B cell (primary cell): ENCODE measurements at regions of chr1 and their contacts with region 1.

Region 1: DNA sequence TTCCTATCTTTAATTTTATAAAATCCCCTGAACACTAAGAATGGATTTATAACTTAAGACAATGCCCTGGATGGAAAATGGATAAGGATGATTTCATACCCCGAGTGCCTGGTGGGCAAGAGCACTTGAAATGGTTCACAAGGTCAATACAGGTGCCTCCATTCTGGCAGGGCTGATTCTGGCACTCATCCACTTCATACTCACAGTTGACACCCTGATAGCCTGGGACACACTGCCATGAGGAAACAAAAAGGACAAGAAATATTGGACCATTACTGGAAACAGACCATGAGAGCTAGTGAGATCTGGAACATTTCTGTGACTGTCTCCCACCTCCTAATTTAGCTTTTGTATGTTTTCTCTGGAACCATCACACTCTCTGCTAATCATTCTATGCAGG is 39.1 kb upstream of the ADAM30 start:
- DNase-seq: no peak
- ATAC-seq: no peak
- H3K4me3 ChIP-seq: no peak overlapping the region
- H3K4me3 Mint-ChIP-seq: no peak overlapping the region
- H3K27ac ChIP-seq: no peak overlapping the region
- H3K27ac Mint-ChIP-seq: no peak overlapping the region
- H3K4me1 ChIP-seq: no peaks in the 10 kb centered on the region
- H3K4me1 Mint-ChIP-seq: no peaks in the 10 kb centered on the region
- H3K27me3 ChIP-seq: no peaks in the 10 kb centered on the region
- H3K27me3 Mint-ChIP-seq: no peaks in the 10 kb centered on the region
- CTCF ChIP-seq: no peak

Region 2: DNA sequence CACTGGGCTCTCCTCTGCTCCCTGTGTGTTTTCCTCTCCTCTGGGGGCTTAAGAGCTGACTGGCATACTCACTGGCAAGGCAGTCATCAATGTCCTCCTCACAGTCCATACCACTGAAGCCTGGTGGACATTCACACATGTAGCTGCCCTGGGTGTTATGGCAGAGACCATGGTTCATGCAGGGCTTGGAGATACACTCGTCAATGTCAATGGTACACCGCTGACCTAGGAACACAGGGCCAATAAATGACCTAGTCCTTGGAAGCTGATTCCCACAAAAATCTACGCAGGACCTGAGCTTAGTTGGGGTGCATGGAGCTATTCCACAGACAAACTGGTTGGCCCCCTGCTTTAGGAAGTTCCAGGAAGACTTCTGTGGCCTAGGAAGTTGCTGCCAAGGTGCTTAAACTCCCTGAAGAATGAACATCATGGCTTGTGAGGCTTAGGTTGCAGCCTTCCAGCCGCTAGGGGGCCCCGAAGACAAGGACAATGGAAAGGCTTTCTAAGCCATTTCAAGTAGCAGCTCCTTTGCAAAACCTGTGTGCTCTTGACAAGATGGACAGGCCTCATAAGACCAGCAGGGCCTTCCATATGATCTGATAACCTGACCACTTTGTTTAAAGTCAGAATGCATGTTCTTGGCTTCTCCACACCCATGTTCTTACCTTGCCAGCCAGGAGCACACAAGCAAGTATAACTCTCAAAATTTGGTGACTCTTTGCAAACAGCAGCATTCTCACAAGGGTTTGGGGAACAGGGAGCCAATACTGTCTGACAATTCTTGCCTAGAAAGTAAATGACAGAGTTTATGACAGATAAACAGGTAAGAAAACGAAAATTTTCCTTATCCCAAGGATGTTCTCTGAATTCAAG is 13.2 kb after region 1 on chr1:
- CTCF ChIA-PET with region 1: interaction called, 13 read pairs
- POLR2A ChIA-PET with region 1: no interaction called
- intact Hi-C with region 1: no loop called
- DNase-seq: peak; percentile 66
- ATAC-seq: peak; percentile 75
- H3K4me3 ChIP-seq: no peak overlapping the region
- H3K4me3 Mint-ChIP-seq: no peak overlapping the region
- H3K27ac ChIP-seq: no peak overlapping the region
- H3K27ac Mint-ChIP-seq: peak overlapping the region; percentile 10
- H3K4me1 ChIP-seq: no peaks in the 10 kb centered on the region
- H3K4me1 Mint-ChIP-seq: peaks cover 4% of the 10 kb centered on the region
- H3K27me3 ChIP-seq: no peaks in the 10 kb centered on the region
- H3K27me3 Mint-ChIP-seq: no peaks in the 10 kb centered on the region
- CTCF ChIP-seq: peak; percentile 78